Cardiac septum (tissue), 1 donor: ENCODE measurements at regions of chr15 and their contacts with region 1.

Region 1: GRCh38 chr15:97259943-97260342 is 700.6 kb upstream of the ARRDC4 start:
- DNase-seq: no peak

Region 2: GRCh38 chr15:97750060-97750459 is 490.1 kb after region 1 on chr15:
- intact Hi-C with region 1: loop called (anchors 5 kb)
- DNase-seq: no peak